Activated B cell treated with CpG ODN at 0.5 μM for 24 hours (primary cell): ENCODE measurements at regions of chr12 and their contacts with region 1.

Region 1: GRCh38 chr12:112178796-112179195 is 53.4 kb downstream of the TRAFD1 start:
- DNase-seq: no peak
- ATAC-seq: no peak
- H3K4me3 Mint-ChIP-seq: no peak overlapping the region
- H3K27ac Mint-ChIP-seq: no peak overlapping the region
- H3K4me1 Mint-ChIP-seq: no peaks in the 10 kb centered on the region
- H3K27me3 Mint-ChIP-seq: no peaks in the 10 kb centered on the region
- CTCF ChIP-seq: no peak

Region 2: GRCh38 chr12:112140728-112141127 is 38.1 kb before region 1 on chr12:
- CTCF ChIA-PET with region 1: no interaction called
- POLR2A ChIA-PET with region 1: no interaction called
- intact Hi-C with region 1: loop called (anchors 1 kb)
- DNase-seq: no peak
- ATAC-seq: no peak
- H3K4me3 Mint-ChIP-seq: no peak overlapping the region
- H3K27ac Mint-ChIP-seq: no peak overlapping the region
- H3K4me1 Mint-ChIP-seq: peaks cover 12% of the 10 kb centered on the region
- H3K27me3 Mint-ChIP-seq: no peaks in the 10 kb centered on the region
- CTCF ChIP-seq: no peak